Sigmoid colon (tissue), 7 donors: ENCODE measurements at regions of chr9 and their contacts with region 1.

Region 1: DNA sequence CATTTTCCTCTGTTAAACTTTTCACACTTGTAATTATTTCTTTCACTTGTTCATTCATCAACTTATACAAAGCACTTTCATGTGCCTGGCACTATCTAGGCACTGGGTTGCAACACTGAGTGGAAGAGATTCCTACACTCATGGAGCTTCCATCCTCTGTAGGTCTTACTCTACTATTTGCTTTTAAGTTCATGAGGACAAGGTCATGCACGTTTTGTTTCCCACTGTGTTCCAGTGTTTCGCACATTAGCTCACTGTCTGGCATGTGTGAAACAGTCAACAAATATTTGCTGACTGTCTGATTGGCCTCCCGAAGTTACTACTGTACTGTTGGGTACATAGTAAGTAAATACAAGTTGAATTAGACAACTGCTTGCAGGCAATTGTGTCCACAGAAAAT is 87.9 kb upstream of the IFNK start:
- DNase-seq: no peak
- H3K4me3 ChIP-seq: no peak overlapping the region
- H3K27ac ChIP-seq: no peak overlapping the region
- H3K4me1 ChIP-seq: peaks cover 0 to 33% (median 28%) of the 10 kb centered on the region in 4 donors
- H3K27me3 ChIP-seq: no peaks in the 10 kb centered on the region
- CTCF ChIP-seq: no peak
- EP300 ChIP-seq: no peak
- POLR2A ChIP-seq: no peak

Region 2: DNA sequence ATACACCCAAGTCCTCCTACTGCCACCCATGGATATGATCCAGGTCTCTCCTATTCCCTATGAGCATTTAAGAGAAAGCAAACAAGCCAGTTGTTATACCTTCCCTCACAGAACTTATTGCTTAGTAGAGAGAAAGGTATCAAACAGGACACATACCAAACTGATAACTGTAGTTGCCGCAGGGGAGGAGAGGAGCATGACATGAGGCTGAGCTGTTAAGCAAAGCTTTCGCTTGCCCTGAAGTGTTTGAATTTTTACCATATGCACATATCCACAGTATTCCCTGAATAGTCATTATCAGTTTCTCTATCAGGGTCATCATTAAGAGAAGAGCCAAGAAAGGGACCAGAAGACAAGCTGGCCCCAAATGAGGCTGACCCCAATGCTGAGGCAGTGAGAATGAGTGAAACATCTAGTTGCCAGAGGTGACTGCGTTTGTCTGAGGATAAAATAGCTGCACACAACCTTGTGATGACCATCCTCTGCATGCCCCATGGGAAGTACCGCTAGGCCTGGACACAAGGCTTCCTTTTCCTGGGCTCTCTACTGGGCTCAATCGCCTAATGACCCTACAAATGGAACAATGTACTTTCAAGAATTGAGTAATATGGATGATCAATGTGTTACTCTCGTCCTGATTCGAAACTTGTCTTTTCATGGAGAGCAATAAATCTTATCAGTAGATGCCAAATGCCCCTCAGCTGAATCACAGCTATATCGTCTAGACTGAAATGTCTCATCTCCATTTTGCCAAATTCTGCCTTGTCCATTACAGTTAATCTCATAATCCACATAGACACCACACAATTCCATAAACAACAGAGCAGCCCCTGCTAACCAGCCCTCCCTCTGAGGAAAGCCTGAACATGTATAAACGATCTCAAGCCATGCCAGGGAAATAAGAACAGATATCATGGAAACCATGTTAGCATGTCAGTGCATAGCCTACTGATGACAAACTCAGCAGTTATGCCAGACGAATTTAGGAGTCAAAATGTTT is 83.5 kb after region 1 on chr9:
- intact Hi-C with region 1: loop called (anchors 5 kb)
- DNase-seq: no peak
- H3K4me3 ChIP-seq: no peak overlapping the region
- H3K27ac ChIP-seq: no peak overlapping the region
- H3K4me1 ChIP-seq: peaks cover 0 to 11% (median 4%) of the 10 kb centered on the region in 4 donors
- H3K27me3 ChIP-seq: no peaks in the 10 kb centered on the region
- CTCF ChIP-seq: no peak
- EP300 ChIP-seq: no peak
- POLR2A ChIP-seq: no peak

Region 3: DNA sequence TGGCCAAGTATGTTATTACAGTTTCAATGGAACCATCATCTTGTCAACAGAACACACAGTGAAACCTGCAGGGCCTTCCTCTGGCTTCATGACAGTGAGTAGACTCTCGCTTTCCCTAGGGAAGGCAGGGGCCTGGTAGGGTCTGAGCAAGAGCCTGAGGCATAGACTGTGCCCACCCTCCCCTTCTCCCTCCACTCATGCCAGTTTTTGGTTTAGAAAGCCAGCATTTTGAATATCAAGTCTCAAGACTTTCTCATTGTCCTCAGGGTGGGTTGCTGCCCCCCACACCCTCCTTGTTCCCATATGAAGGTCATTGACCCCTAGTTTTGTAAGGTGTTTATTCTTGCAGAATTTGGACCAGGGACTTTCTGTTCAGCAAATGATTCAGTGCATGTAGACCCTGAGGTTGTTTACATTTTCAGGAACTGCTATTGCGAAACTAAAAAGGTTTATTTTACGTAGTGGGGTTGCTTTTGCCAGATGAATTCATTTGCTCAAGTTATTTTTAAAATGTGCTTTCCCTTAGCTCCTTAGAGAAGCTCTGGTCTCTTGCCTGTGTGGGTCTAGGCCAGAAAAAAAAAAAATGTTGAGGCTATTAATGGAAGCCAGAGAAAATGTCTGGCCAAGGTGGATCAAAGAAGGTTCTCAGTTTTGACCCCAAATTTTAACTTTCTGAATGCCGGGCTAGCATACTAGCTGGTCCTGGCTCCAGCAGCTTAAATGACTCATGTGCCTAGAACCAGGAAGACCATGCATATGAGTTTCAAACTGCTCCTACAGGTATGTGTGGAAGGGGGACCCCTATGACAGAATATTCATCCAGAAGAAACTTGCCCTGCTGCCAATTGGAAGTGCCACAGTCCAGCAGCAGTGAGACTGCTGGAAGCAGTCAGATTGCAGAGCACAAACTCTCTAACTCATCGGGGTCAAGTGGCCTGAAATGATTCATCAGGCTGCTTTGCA is 103.5 kb after region 1 on chr9:
- intact Hi-C with region 1: no loop called
- DNase-seq: peak; percentile 83
- H3K4me3 ChIP-seq: no peak overlapping the region
- H3K27ac ChIP-seq: peak overlapping the region; percentile 74 to 89 (median 86)
- H3K4me1 ChIP-seq: peaks cover 0 to 66% (median 51%) of the 10 kb centered on the region in 4 donors
- H3K27me3 ChIP-seq: no peaks in the 10 kb centered on the region
- CTCF ChIP-seq: no peak
- EP300 ChIP-seq: peak; percentile 95 to 99 (median 96)
- POLR2A ChIP-seq: no peak